ENCODE measurements at regions of chr7 and their contacts with region 1.

Region 1: GRCh38 chr7:115869225-115869624 is 161.3 kb downstream of the TFEC start:
- DNase-seq: no peak
- H3K4me3 ChIP-seq: no peak overlapping the region
- H3K4me3 Mint-ChIP-seq: no peak overlapping the region
- H3K27ac Mint-ChIP-seq: no peak overlapping the region
- H3K4me1 ChIP-seq: no peaks in the 10 kb centered on the region
- H3K4me1 Mint-ChIP-seq: no peaks in the 10 kb centered on the region
- H3K27me3 ChIP-seq: no peaks in the 10 kb centered on the region; the same call in 1 of the 2 replicates
- H3K27me3 Mint-ChIP-seq: no peaks in the 10 kb centered on the region
- CTCF ChIP-seq: no peak

Region 2: GRCh38 chr7:115910541-115911164 is 41.4 kb after region 1 on chr7:
- CTCF ChIA-PET with region 1: no interaction called
- POLR2A ChIA-PET with region 1: no interaction called
- intact Hi-C with region 1: loop called (anchors 5 kb)
- DNase-seq: peak in 1 of 2 experiments; percentile 25
- H3K4me3 ChIP-seq: no peak overlapping the region
- H3K4me3 Mint-ChIP-seq: no peak overlapping the region
- H3K27ac Mint-ChIP-seq: no peak overlapping the region
- H3K4me1 ChIP-seq: no peaks in the 10 kb centered on the region
- H3K4me1 Mint-ChIP-seq: peaks cover 5% of the 10 kb centered on the region
- H3K27me3 ChIP-seq: no peaks in the 10 kb centered on the region
- H3K27me3 Mint-ChIP-seq: no peaks in the 10 kb centered on the region
- CTCF ChIP-seq: peak; percentile 63 to 69

Measured in Caco-2 (cell line).